ENCODE measurements at regions of chr11 and their contacts with region 1.

Region 1: GRCh38 chr11:74739546-74740270 is 8.5 kb upstream of the CHRDL2 start:
- DNase-seq: peak; percentile 45
- H3K4me3 ChIP-seq: no peak overlapping the region
- H3K27ac ChIP-seq: no peak overlapping the region
- H3K4me1 ChIP-seq: no peaks in the 10 kb centered on the region
- H3K27me3 ChIP-seq: peaks cover 11% of the 10 kb centered on the region
- CTCF ChIP-seq: peak; percentile 74 to 90 (median 88)
- EP300 ChIP-seq: no peak
- POLR2A ChIP-seq: no peak

Region 2: DNA sequence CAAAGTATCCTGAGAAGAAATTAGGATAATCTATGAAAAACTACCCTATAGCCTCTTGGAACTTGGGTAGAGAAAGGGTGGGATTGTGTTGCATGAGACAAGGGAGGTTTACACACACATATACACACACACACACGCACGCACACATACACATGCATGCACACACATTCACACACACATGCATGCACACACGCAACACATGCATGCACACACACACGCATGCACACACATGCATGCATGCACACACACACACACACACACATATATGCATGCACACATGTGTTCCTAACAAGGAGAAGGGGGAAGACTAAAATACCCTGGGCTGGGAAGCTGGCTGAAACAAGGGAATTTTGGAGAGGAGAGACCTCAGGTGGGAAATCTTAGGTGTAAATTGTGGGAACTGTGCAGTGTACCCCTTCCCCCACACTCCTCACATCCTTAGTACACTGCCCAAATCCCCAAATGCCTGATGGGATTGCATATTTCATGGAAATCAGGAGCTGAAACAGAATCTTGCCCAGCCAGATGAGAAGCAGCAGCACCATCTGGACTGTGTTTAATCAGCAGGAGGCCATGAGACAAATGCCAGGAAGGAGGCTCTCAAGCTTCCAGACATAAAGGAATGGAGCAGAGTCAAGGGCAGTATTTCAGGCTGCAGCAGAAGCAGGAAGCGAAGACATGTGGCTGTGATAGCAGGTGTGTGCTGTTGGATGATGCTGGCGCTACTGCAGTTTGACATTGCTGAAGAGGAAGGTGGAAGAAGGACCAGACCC is 161.9 kb before region 1 on chr11:
- in situ Hi-C with region 1: no loop called
- intact Hi-C with region 1: no loop called
- DNase-seq: no peak
- H3K4me3 ChIP-seq: no peak overlapping the region
- H3K27ac ChIP-seq: peak overlapping the region in 1 of 4 donors; percentile 26
- H3K4me1 ChIP-seq: peaks cover 0 to 58% (median 27%) of the 10 kb centered on the region in 4 donors
- H3K27me3 ChIP-seq: no peaks in the 10 kb centered on the region
- CTCF ChIP-seq: no peak
- EP300 ChIP-seq: no peak
- POLR2A ChIP-seq: no peak

Region 3: DNA sequence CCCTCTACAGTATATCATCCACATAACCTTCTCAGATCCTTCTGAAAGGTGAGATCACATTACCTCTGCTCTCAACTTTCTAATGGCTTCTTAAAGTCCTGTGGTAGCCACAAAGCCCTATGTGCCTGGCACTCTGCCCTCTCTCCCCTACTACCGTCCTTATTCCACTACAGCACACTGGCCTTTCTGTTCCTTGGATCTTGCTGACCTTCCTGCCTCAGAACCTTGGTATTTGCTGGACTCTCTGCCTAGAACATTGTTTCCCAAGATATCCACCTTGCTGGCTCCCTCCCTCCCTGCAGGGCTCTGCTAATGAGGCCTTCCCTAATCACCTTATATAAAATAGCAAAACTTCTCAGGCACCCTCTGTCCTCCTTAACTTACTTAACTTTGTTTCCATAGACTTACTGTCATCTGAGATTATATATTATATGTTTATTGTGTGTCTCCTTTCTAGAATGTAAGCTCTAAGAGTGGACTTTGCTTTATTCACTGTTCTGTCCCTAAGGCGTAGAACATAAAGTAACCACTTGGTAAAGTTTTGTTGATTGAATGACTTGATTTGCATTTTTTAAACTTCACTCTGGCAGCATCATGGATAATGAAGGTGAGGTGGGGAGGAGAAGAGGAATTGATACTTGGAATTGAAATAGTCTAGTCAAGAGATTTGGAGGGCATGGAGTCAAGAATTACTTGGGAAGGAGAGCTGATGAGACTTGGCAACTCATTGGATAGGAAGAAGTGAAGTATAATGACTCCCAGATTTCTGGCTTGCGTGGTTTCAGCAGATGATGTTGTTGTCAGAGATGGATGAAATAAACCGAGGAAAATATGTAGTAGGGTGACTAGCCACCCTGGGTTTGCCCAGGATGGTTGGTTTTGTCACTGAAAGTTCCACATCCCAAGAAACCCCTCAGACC is 136.8 kb before region 1 on chr11:
- in situ Hi-C with region 1: loop called in 1 of 4 experiments (anchors 25 kb)
- intact Hi-C with region 1: loop called (anchors 5 kb)
- DNase-seq: no peak
- H3K4me3 ChIP-seq: no peak overlapping the region
- H3K27ac ChIP-seq: peak overlapping the region in 3 of 4 donors; percentile 30 to 59 (median 49)
- H3K4me1 ChIP-seq: peaks cover 0 to 22% (median 6%) of the 10 kb centered on the region in 4 donors
- H3K27me3 ChIP-seq: no peaks in the 10 kb centered on the region
- CTCF ChIP-seq: no peak
- EP300 ChIP-seq: no peak
- POLR2A ChIP-seq: peak; percentile 23

Measured in transverse colon (tissue), 4 donors.